IMR-90 (cell line): ENCODE measurements at regions of chr5 and their contacts with region 1.

Region 1: DNA sequence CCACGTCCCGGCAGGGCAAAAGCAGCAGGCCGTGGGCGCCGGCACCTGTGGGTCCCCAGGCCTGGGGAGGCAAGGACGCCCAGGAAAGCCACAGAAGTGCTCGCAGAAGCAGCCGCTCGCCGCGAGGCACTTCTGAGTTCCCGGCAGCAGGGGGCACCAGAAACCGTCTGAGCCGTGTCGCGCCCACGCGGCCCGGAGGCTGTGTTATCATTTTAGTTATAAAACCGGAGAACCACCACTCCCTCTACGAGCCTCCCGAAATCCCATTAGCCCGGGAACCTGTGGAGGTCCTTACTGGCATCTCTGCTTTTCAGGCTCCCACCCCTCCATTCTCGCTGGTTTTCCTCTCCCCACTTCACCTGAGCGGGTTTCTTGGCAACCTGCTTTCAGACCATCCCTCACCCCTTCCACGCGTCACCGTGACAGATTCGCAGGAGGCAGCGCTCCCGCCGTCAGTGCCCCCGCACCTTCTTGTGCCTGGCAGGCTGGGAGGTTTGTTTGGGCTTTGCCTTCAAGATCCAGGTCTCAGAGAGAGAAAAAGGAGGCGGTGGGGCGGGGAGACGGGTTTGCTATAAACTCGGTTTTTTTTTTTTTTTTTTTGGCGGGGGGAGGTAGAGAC is 2.3 kb downstream of the GDNF start:
- DNase-seq: peak; percentile 77
- ATAC-seq: peak; percentile 59
- H3K4me3 ChIP-seq: peak overlapping the region; percentile 40
- H3K27ac ChIP-seq: peak overlapping the region; percentile 4; the same call in 1 of the 2 replicates
- H3K4me1 ChIP-seq: peaks cover 6% of the 10 kb centered on the region
- H3K27me3 ChIP-seq: peaks cover 16% of the 10 kb centered on the region; the same call in 1 of the 2 replicates
- CTCF ChIP-seq: peak; percentile 92
- POLR2A ChIP-seq: peak; percentile 67; the same call in 1 of the 2 replicates
- RAD21 ChIP-seq: peak; percentile 93

Region 2: DNA sequence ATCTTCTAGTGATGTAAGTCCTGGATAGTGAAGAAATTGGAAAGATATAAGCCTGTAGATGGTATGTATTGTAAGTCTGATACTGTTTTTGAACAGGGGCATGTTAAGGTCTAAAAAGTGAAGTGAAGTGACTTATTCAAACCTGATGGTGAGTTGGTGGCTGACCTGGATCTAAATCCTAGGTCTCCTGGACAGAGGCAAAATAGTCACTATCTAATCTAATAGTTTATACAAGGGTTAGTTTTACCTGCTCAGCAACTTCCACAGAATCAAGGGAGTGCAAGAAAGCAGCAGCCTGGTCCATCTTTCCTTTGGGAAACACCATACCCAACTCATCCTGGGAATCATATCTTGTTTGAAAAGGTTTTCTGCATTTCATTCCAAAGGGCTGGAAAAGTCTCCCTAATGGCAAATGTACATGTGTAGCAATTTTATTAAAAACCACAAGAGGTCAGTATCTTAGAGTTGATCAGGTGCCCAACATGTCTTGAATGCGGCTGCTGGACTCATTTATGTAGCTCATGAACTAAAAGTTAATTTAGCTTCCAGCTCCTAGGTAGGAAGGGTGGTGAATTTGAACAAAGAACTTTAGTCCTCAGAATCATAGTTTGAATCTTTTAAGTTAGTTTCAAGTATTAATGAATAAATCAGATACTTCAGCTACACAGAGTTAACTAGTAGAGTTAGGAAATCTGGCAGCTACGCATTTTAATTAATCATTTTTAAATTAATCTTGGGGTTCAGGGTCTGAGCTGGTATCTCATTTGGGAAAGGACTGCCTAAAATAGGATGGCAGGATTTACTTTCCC is 1659.6 kb before region 1 on chr5:
- CTCF ChIA-PET with region 1: no interaction called
- POLR2A ChIA-PET with region 1: no interaction called
- dilution Hi-C with region 1: no loop called
- in situ Hi-C with region 1: no loop called
- intact Hi-C with region 1: no loop called
- DNase-seq: peak; percentile 65
- ATAC-seq: peak; percentile 77
- H3K4me3 ChIP-seq: no peak overlapping the region
- H3K27ac ChIP-seq: no peak overlapping the region
- H3K4me1 ChIP-seq: 0 out of 2 replicates have a peak, but pooled peaks cover 5% of the 10 kb centered on the region
- H3K27me3 ChIP-seq: no peaks in the 10 kb centered on the region
- CTCF ChIP-seq: peak; percentile 63
- POLR2A ChIP-seq: no peak
- RAD21 ChIP-seq: peak; percentile 63

Region 3: DNA sequence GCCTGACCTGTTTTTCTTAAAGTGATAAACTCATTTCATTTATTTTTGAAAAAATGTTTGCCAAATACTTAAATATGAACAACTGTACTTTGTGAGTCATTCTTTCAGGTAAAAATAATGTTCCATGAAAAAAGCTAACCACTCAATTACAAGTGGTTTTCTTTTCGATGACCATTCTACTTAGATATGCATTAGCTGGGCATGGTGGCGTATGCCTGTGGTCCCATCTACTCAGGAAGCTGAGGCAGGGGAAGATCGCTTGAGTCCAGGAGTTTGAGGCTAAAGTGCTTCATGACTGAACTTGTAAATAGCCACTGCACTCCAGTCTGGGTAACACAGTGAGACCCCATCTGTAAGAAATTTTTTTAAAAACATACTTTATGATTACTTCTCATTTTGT is 462.4 kb before region 1 on chr5:
- CTCF ChIA-PET with region 1: no interaction called
- POLR2A ChIA-PET with region 1: interaction called, 14 read pairs
- dilution Hi-C with region 1: no loop called
- in situ Hi-C with region 1: no loop called
- intact Hi-C with region 1: no loop called
- DNase-seq: no peak
- ATAC-seq: no peak
- H3K4me3 ChIP-seq: no peak overlapping the region
- H3K27ac ChIP-seq: no peak overlapping the region
- H3K4me1 ChIP-seq: no peaks in the 10 kb centered on the region
- H3K27me3 ChIP-seq: no peaks in the 10 kb centered on the region
- CTCF ChIP-seq: no peak
- POLR2A ChIP-seq: no peak
- RAD21 ChIP-seq: no peak

Region 4: GRCh38 chr5:37412515-37413277 is 424.8 kb before region 1 on chr5:
- CTCF ChIA-PET with region 1: interaction called, 3 read pairs
- POLR2A ChIA-PET with region 1: no interaction called
- dilution Hi-C with region 1: no loop called
- in situ Hi-C with region 1: no loop called
- intact Hi-C with region 1: loop called (anchors 1 kb)
- DNase-seq: peak; percentile 85
- ATAC-seq: peak; percentile 88
- H3K4me3 ChIP-seq: no peak overlapping the region
- H3K27ac ChIP-seq: no peak overlapping the region
- H3K4me1 ChIP-seq: no peaks in the 10 kb centered on the region
- H3K27me3 ChIP-seq: no peaks in the 10 kb centered on the region
- CTCF ChIP-seq: peak; percentile 100
- POLR2A ChIP-seq: no peak
- RAD21 ChIP-seq: peak; percentile 95

Region 5: GRCh38 chr5:37615184-37615583 is 222.3 kb before region 1 on chr5:
- CTCF ChIA-PET with region 1: no interaction called
- POLR2A ChIA-PET with region 1: no interaction called
- dilution Hi-C with region 1: no loop called
- in situ Hi-C with region 1: no loop called
- intact Hi-C with region 1: loop called (anchors 10 kb)
- DNase-seq: peak; percentile 86
- ATAC-seq: peak; percentile 56
- H3K4me3 ChIP-seq: no peak overlapping the region
- H3K27ac ChIP-seq: no peak overlapping the region
- H3K4me1 ChIP-seq: no peaks in the 10 kb centered on the region
- H3K27me3 ChIP-seq: no peaks in the 10 kb centered on the region
- CTCF ChIP-seq: no peak
- POLR2A ChIP-seq: no peak
- RAD21 ChIP-seq: no peak

Region 6: GRCh38 chr5:37722236-37723146 is 115.0 kb before region 1 on chr5:
- CTCF ChIA-PET with region 1: interaction called, 5 read pairs
- POLR2A ChIA-PET with region 1: no interaction called
- dilution Hi-C with region 1: no loop called
- in situ Hi-C with region 1: no loop called
- intact Hi-C with region 1: loop called (anchors 5 kb)
- DNase-seq: peak; percentile 96
- ATAC-seq: peak; percentile 93
- H3K4me3 ChIP-seq: no peak overlapping the region
- H3K27ac ChIP-seq: no peak overlapping the region
- H3K4me1 ChIP-seq: peaks cover 9% of the 10 kb centered on the region
- H3K27me3 ChIP-seq: no peaks in the 10 kb centered on the region
- CTCF ChIP-seq: no peak
- POLR2A ChIP-seq: no peak
- RAD21 ChIP-seq: peak; percentile 25; the same call in 1 of the 2 replicates

Region 7: DNA sequence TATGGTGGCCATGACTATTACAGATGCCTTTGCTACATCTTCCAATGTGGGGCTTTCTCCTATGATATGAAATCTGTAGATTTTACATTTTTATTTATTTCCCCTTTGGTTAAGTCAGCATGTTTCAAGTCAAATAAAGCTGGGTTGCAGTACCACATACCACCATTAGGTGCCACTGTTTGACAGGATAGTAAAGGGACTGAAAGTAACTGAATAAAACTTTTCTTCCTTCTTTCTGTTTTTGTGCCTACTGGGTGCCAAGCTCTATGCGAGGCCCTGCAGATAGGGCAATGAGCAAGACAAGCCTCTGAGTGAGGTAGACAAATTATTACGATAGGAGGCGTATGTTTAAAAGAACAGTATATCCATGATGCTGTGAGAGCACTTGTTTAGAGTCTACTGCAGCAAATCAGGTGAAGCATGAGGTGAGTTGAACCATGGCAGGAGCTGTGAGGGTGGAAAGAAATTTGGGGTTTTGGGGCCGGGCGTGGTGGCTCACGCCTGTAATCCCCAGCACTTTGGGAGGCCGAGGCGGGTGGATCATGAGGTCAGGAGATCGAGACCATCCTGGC is 62.5 kb before region 1 on chr5:
- CTCF ChIA-PET with region 1: interaction called, 3 read pairs
- POLR2A ChIA-PET with region 1: no interaction called
- dilution Hi-C with region 1: no loop called
- in situ Hi-C with region 1: no loop called
- intact Hi-C with region 1: loop called (anchors 5 kb)
- DNase-seq: peak; percentile 31
- ATAC-seq: no peak
- H3K4me3 ChIP-seq: no peak overlapping the region
- H3K27ac ChIP-seq: no peak overlapping the region
- H3K4me1 ChIP-seq: peaks cover 18% of the 10 kb centered on the region
- H3K27me3 ChIP-seq: no peaks in the 10 kb centered on the region
- CTCF ChIP-seq: peak; percentile 54
- POLR2A ChIP-seq: no peak
- RAD21 ChIP-seq: peak; percentile 59

Region 8: GRCh38 chr5:37799865-37800421 is 37.6 kb before region 1 on chr5:
- CTCF ChIA-PET with region 1: no interaction called
- POLR2A ChIA-PET with region 1: no interaction called
- dilution Hi-C with region 1: no loop called
- in situ Hi-C with region 1: no loop called
- intact Hi-C with region 1: no loop called
- DNase-seq: no peak
- ATAC-seq: peak; percentile 53
- H3K4me3 ChIP-seq: no peak overlapping the region
- H3K27ac ChIP-seq: no peak overlapping the region
- H3K4me1 ChIP-seq: no peaks in the 10 kb centered on the region
- H3K27me3 ChIP-seq: no peaks in the 10 kb centered on the region
- CTCF ChIP-seq: no peak
- POLR2A ChIP-seq: no peak
- RAD21 ChIP-seq: no peak

Region 9: GRCh38 chr5:37814699-37815098 is 22.8 kb before region 1 on chr5:
- CTCF ChIA-PET with region 1: no interaction called
- POLR2A ChIA-PET with region 1: no interaction called
- dilution Hi-C with region 1: no loop called
- in situ Hi-C with region 1: no loop called
- intact Hi-C with region 1: no loop called
- DNase-seq: peak; percentile 41
- ATAC-seq: no peak
- H3K4me3 ChIP-seq: no peak overlapping the region
- H3K27ac ChIP-seq: no peak overlapping the region
- H3K4me1 ChIP-seq: peaks cover 11% of the 10 kb centered on the region
- H3K27me3 ChIP-seq: no peaks in the 10 kb centered on the region
- CTCF ChIP-seq: no peak
- POLR2A ChIP-seq: no peak
- RAD21 ChIP-seq: no peak

Region 10: GRCh38 chr5:38193015-38193581 is 355.6 kb after region 1 on chr5:
- CTCF ChIA-PET with region 1: interaction called, 19 read pairs
- POLR2A ChIA-PET with region 1: interaction called, 4 read pairs
- dilution Hi-C with region 1: no loop called
- in situ Hi-C with region 1: loop called (anchors 5 kb)
- intact Hi-C with region 1: loop called (anchors 1 kb)
- DNase-seq: peak; percentile 53
- ATAC-seq: peak; percentile 97
- H3K4me3 ChIP-seq: no peak overlapping the region
- H3K27ac ChIP-seq: no peak overlapping the region
- H3K4me1 ChIP-seq: no peaks in the 10 kb centered on the region
- H3K27me3 ChIP-seq: peaks cover 51% of the 10 kb centered on the region
- CTCF ChIP-seq: peak; percentile 93
- POLR2A ChIP-seq: 0 out of 2 replicates have a peak, but pooled peaks have one; percentile 26
- RAD21 ChIP-seq: peak; percentile 98